CD4-positive, alpha-beta T cell (primary cell): ENCODE measurements at regions of chr2 and their contacts with region 1.

Region 1: GRCh38 chr2:216163518-216163917 is 54.4 kb downstream of the XRCC5 start:
- DNase-seq: no peak
- ATAC-seq: no peak
- H3K4me3 ChIP-seq: no peak overlapping the region
- H3K4me3 Mint-ChIP-seq: no peak overlapping the region
- H3K27ac ChIP-seq: no peak overlapping the region
- H3K27ac Mint-ChIP-seq: peak overlapping the region; percentile 17
- H3K4me1 ChIP-seq: peaks cover 3% of the 10 kb centered on the region
- H3K4me1 Mint-ChIP-seq: peaks cover 51% of the 10 kb centered on the region
- H3K27me3 ChIP-seq: no peaks in the 10 kb centered on the region
- H3K27me3 Mint-ChIP-seq: no peaks in the 10 kb centered on the region
- CTCF ChIP-seq: no peak

Region 2: DNA sequence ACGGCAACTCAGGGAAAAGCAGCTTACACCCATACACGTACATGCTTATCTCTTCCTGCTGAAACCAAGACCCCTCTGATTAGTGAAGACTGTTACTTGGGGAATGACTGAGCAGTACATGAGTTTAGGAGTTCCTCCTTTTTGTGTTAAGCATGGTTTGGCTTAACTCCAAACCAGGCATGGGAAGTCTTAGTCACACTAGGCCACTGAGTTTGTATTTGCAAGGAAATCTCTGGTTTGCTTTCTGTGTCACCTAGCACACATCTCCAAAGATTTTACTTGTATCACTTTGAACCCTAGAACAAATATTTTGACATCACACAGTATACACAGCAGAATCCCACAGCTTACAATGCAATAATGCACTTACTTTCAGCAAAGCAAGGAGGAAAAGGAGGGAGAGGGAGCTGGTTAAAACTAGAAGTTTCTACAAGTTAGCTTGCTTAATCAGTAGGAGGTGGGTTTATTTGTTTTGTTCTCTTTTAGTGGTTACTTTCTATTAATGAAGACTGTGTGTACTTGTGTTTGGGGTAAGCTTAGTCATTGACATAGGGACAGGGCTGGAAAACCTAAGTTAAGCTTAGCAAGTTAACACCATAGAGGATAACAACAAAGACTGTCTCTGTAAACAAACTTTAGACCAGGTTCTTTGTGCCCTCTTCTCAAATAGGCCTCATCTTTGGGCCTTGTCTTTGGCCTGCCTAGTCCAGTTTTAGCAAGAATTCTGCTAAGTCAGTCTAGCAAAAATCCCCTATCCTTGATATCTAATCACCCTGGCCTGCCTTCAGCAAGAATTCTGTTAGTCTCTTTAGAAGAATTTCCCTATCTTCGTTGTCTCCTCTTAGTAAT is 369.5 kb before region 1 on chr2:
- CTCF ChIA-PET with region 1: no interaction called
- POLR2A ChIA-PET with region 1: no interaction called
- intact Hi-C with region 1: no loop called
- DNase-seq: peak in 3 of 14 experiments; percentile 16 to 62 (median 52)
- ATAC-seq: no peak
- H3K4me3 ChIP-seq: no peak overlapping the region
- H3K4me3 Mint-ChIP-seq: no peak overlapping the region
- H3K27ac ChIP-seq: no peak overlapping the region
- H3K27ac Mint-ChIP-seq: no peak overlapping the region
- H3K4me1 ChIP-seq: no peaks in the 10 kb centered on the region
- H3K4me1 Mint-ChIP-seq: peaks cover 6% of the 10 kb centered on the region
- H3K27me3 ChIP-seq: no peaks in the 10 kb centered on the region
- H3K27me3 Mint-ChIP-seq: no peaks in the 10 kb centered on the region
- CTCF ChIP-seq: no peak

Region 3: GRCh38 chr2:216126943-216127342 is 36.6 kb before region 1 on chr2:
- CTCF ChIA-PET with region 1: interaction called, 4 read pairs
- POLR2A ChIA-PET with region 1: no interaction called
- intact Hi-C with region 1: loop called in 1 of 2 experiments (anchors 5 kb)
- DNase-seq: no peak
- ATAC-seq: no peak
- H3K4me3 ChIP-seq: no peak overlapping the region
- H3K4me3 Mint-ChIP-seq: no peak overlapping the region
- H3K27ac ChIP-seq: no peak overlapping the region
- H3K27ac Mint-ChIP-seq: peak overlapping the region; percentile 64
- H3K4me1 ChIP-seq: peaks cover 4% of the 10 kb centered on the region
- H3K4me1 Mint-ChIP-seq: peaks cover 77% of the 10 kb centered on the region
- H3K27me3 ChIP-seq: no peaks in the 10 kb centered on the region
- H3K27me3 Mint-ChIP-seq: no peaks in the 10 kb centered on the region
- CTCF ChIP-seq: no peak